ENCODE measurements at regions of chr9 and their contacts with region 1.

Region 1: DNA sequence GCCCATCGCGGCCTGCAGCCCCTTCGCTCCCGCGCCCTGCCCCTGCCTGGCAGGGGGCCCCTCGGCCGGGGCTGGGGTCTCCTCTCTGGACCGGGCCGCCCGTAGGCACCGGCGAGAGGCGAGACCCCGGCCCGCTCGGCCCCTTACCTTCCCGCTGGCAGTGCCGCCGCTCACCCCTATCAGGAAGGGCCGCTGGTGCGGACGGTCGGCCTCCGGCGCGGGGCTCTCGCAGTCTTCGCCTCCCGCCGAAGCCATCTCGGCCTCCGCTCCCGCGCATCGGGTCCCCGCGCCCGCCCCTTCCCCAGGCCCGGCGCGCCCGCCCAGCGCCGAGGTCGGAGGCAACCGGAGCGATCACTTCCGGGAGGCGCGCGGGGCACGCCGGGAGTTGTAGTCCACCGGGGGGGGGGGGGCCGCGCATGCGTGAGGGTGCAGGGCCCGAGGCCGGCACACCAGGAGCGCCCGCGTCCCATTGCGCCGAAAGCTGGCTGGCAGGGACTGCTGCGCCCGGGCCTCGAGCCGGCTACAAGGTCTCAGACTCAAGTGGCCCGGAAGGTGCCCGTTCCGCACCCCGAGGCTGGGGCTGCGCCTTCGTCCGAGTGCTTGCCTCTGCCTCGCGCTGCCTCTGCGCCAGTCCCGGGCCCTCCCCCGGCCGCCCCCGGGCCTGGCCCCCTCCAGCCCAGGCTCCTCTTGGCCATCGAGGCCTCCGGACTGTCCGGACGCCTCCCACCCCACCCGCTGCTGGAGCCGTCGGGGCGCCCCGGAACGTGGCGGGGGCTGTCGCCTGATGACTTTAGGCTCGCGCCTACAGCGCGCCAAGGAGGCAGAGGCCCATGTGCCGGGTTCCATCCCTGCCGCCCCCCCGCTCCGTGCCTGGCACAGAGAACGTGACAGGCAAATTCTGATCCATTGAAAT is at the start of gene UCK1:
- DNase-seq: peak; percentile 67
- H3K4me3 Mint-ChIP-seq: peak within 1 kb of the TSS; percentile 70
- H3K27ac Mint-ChIP-seq: no peak within 1 kb of the TSS
- H3K4me1 Mint-ChIP-seq: no peaks in the 10 kb centered on the region
- H3K27me3 Mint-ChIP-seq: no peaks in the 10 kb centered on the region
- CTCF ChIP-seq: no peak
- total RNA-seq, gene UCK1: 16.0 and 19.6 TPM in 2 replicates

Region 2: GRCh38 chr9:131554088-131554864 is 23.1 kb after region 1 on chr9:
- CTCF ChIA-PET with region 1: interaction called, 11 read pairs
- intact Hi-C with region 1: no loop called
- DNase-seq: no peak
- H3K4me3 Mint-ChIP-seq: no peak overlapping the region
- H3K27ac Mint-ChIP-seq: no peak overlapping the region
- H3K4me1 Mint-ChIP-seq: no peaks in the 10 kb centered on the region
- H3K27me3 Mint-ChIP-seq: peaks cover 56% of the 10 kb centered on the region
- CTCF ChIP-seq: no peak

Region 3: GRCh38 chr9:131635285-131635684 is 104.1 kb after region 1 on chr9:
- CTCF ChIA-PET with region 1: no interaction called
- intact Hi-C with region 1: no loop called
- DNase-seq: peak; percentile 76
- H3K4me3 Mint-ChIP-seq: no peak overlapping the region
- H3K27ac Mint-ChIP-seq: peak overlapping the region; percentile 17
- H3K4me1 Mint-ChIP-seq: peaks cover 7% of the 10 kb centered on the region
- H3K27me3 Mint-ChIP-seq: no peaks in the 10 kb centered on the region
- CTCF ChIP-seq: no peak

Measured in Calu3 (cell line).